Endothelial cell of umbilical vein (primary cell): ENCODE measurements at regions of chr5 and their contacts with region 1.

Region 1: DNA sequence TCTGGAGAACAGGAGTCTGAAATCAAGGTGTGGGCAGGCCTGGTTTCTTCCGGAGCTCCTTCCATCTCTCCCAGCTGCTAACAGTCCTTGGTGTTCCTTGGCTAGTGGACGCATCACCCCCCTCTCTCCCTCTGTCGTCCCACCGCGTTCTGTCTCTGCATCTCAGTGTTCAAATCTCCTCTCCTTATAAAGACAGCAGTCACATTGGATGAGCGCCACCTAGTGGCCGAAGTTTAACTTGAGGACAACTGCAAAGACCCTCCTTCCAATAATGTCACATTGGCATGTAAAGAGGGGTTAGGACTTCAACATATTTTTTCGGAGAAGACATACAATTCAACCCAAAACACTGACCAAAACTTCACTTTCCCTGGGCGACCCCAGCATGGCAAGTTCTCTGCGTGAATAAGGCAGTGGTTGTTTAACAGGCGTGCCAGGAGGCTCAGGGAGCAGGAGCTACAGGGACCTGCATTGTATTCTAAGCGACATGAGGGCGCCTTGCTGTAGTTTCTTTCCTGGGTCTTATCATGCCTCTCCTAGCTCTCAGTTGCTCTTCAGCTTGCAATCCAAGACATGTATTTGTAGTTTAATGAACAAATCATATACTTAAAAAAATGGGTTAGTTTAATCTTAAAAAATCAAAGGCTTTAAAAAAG is 27.9 kb upstream of the BASP1 start:
- DNase-seq: peak; percentile 91
- H3K4me3 ChIP-seq: no peak overlapping the region
- H3K27ac ChIP-seq: no peak overlapping the region
- H3K4me1 ChIP-seq: peaks cover 23% of the 10 kb centered on the region
- H3K27me3 ChIP-seq: no peaks in the 10 kb centered on the region
- CTCF ChIP-seq: peak; percentile 65 to 90
- POLR2A ChIP-seq: no peak

Region 2: DNA sequence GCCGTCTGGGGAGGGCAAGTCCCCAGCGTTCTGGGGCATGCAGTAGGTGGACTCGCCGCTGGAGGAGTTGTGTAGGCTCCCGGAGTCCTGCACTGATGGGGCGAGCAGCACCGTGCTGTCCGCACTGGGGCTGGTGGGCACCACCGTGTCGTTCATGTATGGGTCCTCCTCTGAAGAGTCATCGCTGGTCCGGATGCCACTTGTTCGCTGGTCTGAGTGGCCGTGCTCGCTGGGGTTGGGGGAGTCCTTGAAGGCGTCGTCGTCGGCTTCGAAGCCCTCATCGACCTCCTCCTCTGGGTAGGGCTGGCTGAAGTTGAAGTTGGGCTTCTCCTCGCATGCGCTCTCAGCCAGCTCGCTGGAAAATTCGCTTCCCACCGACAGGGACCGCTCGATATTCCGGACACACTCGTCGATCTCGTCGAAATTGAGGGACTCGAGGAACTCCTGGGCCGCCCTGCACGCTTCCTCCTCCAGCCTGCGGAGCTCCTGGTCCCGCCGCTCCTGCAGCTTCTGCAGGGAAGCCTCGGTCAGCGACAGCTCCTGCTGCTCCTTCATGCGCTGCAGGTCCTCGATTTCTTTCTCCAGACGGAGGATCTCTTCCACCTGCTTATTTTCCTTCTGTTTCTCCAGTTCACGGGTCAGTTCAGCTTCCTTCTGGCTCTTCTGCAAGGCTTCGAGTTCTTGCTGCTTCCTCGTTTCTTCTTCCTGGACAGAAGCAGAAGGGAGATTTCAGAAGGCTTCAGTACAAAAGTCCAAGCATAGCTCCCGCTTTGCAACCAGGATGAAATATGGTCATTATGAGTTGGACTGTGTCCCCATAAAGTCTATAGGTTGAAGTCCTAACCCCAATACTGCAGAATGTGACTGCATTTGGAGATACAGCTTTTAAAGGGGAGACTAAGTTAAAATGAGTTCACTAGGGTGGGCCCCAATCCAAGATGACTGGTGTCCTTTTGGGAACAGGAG is 488.1 kb before region 1 on chr5:
- CTCF ChIA-PET with region 1: interaction called, 10 read pairs
- POLR2A ChIA-PET with region 1: no interaction called
- dilution Hi-C with region 1: loop called (anchors 25 kb)
- intact Hi-C with region 1: no loop called
- DNase-seq: no peak
- H3K4me3 ChIP-seq: no peak overlapping the region
- H3K27ac ChIP-seq: no peak overlapping the region
- H3K4me1 ChIP-seq: peaks cover 38% of the 10 kb centered on the region
- H3K27me3 ChIP-seq: no peaks in the 10 kb centered on the region
- CTCF ChIP-seq: no peak
- POLR2A ChIP-seq: no peak

Region 3: GRCh38 chr5:16791036-16791705 is 398.3 kb before region 1 on chr5:
- CTCF ChIA-PET with region 1: interaction called, 194 read pairs
- POLR2A ChIA-PET with region 1: interaction called, 5 read pairs
- dilution Hi-C with region 1: loop called (anchors 25 kb)
- intact Hi-C with region 1: loop called (anchors 1 kb)
- DNase-seq: peak; percentile 79
- H3K4me3 ChIP-seq: no peak overlapping the region
- H3K27ac ChIP-seq: no peak overlapping the region
- H3K4me1 ChIP-seq: no peaks in the 10 kb centered on the region
- H3K27me3 ChIP-seq: no peaks in the 10 kb centered on the region
- CTCF ChIP-seq: peak; percentile 35 to 55
- POLR2A ChIP-seq: no peak

Region 4: DNA sequence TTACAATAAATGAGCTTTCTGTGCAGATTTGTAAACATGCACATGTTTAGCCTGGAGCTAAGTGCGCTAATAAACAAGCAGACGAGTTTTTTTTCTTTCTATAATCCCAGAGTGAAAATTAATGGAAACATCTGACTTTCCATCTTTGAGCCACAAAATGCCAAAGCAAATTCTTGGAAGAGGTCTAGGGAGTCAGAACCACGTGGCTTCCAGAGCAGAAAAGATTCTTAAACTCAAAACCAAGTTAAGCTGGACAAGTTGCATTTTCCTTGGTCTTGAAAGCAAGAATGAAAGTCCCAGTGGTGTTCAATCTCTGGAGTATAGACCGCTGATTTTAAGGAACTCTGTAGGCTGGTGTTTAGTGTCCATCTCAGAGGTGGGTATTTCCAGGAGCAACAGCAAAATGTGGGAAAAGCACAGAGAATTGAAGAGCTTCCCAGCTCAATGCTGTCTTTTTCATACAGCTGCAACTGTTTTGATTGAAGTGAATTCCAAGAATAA is 324.8 kb before region 1 on chr5:
- CTCF ChIA-PET with region 1: interaction called, 14 read pairs
- POLR2A ChIA-PET with region 1: no interaction called
- dilution Hi-C with region 1: no loop called
- intact Hi-C with region 1: no loop called
- DNase-seq: no peak
- H3K4me3 ChIP-seq: no peak overlapping the region
- H3K27ac ChIP-seq: no peak overlapping the region
- H3K4me1 ChIP-seq: no peaks in the 10 kb centered on the region
- H3K27me3 ChIP-seq: no peaks in the 10 kb centered on the region
- CTCF ChIP-seq: no peak
- POLR2A ChIP-seq: no peak

Region 5: GRCh38 chr5:17000291-17000939 is 189.1 kb before region 1 on chr5:
- CTCF ChIA-PET with region 1: interaction called, 18 read pairs
- POLR2A ChIA-PET with region 1: no interaction called
- dilution Hi-C with region 1: no loop called
- intact Hi-C with region 1: loop called (anchors 1 kb)
- DNase-seq: peak; percentile 77
- H3K4me3 ChIP-seq: no peak overlapping the region
- H3K27ac ChIP-seq: peak overlapping the region; percentile 97
- H3K4me1 ChIP-seq: peaks cover 32% of the 10 kb centered on the region
- H3K27me3 ChIP-seq: no peaks in the 10 kb centered on the region
- CTCF ChIP-seq: no peak
- POLR2A ChIP-seq: no peak

Region 6: DNA sequence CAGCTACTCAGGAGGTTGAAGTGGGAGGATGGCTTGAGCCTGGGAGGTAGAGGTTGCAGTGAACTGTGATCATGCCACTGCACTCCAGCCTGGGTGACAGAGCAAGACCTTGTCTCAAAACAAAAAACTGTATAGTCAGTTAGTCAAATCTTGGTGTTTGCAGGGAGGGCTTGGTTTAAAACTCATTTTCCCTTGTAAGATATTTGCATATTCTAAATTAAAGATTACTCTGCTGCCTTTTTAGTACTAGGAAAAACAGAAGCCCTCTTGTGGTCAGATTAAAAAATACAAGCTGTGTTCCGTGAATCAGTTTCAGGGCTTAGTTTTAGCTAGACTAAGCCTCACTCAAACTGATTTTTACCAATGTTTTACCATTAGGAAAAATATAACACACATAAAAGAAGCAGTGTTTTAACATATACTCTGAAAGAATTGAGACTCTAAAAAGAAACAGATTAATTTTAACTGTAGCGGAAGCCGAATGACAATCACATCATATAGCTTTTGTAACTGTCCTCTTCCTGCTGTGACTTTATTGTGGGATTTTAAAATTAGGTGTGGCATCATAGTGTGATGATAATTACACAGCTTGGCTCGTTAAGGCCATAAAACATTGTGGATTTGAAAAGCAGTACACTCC is 56.9 kb before region 1 on chr5:
- CTCF ChIA-PET with region 1: interaction called, 113 read pairs
- POLR2A ChIA-PET with region 1: no interaction called
- dilution Hi-C with region 1: no loop called
- intact Hi-C with region 1: loop called (anchors 1 kb)
- DNase-seq: peak; percentile 67
- H3K4me3 ChIP-seq: no peak overlapping the region
- H3K27ac ChIP-seq: no peak overlapping the region
- H3K4me1 ChIP-seq: peaks cover 23% of the 10 kb centered on the region
- H3K27me3 ChIP-seq: no peaks in the 10 kb centered on the region
- CTCF ChIP-seq: peak; percentile 26 to 27
- POLR2A ChIP-seq: no peak

Region 7: GRCh38 chr5:17248999-17249634 is 59.6 kb after region 1 on chr5:
- CTCF ChIA-PET with region 1: no interaction called
- POLR2A ChIA-PET with region 1: no interaction called
- dilution Hi-C with region 1: no loop called
- intact Hi-C with region 1: no loop called
- DNase-seq: peak; percentile 65
- H3K4me3 ChIP-seq: no peak overlapping the region
- H3K27ac ChIP-seq: peak overlapping the region; percentile 68
- H3K4me1 ChIP-seq: peaks cover 42% of the 10 kb centered on the region
- H3K27me3 ChIP-seq: no peaks in the 10 kb centered on the region
- CTCF ChIP-seq: no peak
- POLR2A ChIP-seq: no peak